Activated CD4-positive, alpha-beta memory T cell treated with anti-CD3 and anti-CD28 coated beads, Interleukin-2, amount 10 ng/mL, durations not matched to agents 7 days and 5 days (primary cell): ENCODE measurements at regions of chr3 and their contacts with region 1.

Region 1: DNA sequence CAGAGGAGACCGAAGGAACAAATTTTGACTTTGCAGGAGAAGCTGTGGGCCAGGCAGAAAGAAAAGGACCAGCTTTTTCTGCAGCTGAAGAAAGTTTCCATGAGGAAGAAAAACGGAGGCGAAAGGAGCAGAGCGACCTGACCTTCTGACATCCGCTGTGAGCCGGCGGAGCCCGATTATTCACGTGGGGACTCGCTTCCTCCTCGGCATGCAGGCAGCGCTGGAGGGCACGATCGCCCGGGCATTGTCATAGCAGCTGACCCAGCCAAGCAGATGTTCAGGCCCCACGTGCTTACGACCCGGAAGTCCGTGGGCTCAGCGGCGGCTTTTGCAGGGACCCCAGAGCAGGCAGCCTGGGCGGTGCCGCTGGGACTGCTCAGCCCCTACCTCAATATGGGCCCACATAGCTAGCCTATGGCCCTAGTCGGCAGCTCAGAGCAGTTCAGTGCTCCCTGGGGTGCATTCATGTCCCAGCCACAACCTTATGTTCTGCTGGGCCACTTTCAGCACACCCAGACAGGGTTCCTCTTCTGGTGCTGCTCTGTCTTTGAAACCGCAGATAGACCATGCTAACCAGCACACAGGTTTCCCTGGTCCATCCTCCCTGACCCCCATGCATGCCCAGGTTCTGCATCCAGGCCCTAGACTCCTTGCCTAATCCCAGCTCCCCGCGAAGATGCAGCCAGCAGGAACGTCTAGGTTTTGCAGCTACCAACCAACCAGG is 10.5 kb upstream of the EIF4A2 start:
- DNase-seq: peak; percentile 74
- H3K4me3 Mint-ChIP-seq: peak overlapping the region; percentile 77
- H3K27ac Mint-ChIP-seq: peak overlapping the region; percentile 77
- H3K4me1 Mint-ChIP-seq: peaks cover 16% of the 10 kb centered on the region
- H3K27me3 Mint-ChIP-seq: no peaks in the 10 kb centered on the region

Region 2: GRCh38 chr3:186442162-186442561 is 330.7 kb before region 1 on chr3:
- CTCF ChIA-PET with region 1: no interaction called
- POLR2A ChIA-PET with region 1: no interaction called
- DNase-seq: no peak
- H3K4me3 Mint-ChIP-seq: no peak overlapping the region
- H3K27ac Mint-ChIP-seq: no peak overlapping the region
- H3K4me1 Mint-ChIP-seq: no peaks in the 10 kb centered on the region
- H3K27me3 Mint-ChIP-seq: peaks cover 11% of the 10 kb centered on the region

Region 3: GRCh38 chr3:186790261-186790981 is 17.6 kb after region 1 on chr3:
- CTCF ChIA-PET with region 1: interaction called, 7 read pairs
- POLR2A ChIA-PET with region 1: interaction called, 240 read pairs
- DNase-seq: no peak
- H3K4me3 Mint-ChIP-seq: no peak overlapping the region
- H3K27ac Mint-ChIP-seq: peak overlapping the region; percentile 22
- H3K4me1 Mint-ChIP-seq: peaks cover 48% of the 10 kb centered on the region
- H3K27me3 Mint-ChIP-seq: no peaks in the 10 kb centered on the region

Region 4: DNA sequence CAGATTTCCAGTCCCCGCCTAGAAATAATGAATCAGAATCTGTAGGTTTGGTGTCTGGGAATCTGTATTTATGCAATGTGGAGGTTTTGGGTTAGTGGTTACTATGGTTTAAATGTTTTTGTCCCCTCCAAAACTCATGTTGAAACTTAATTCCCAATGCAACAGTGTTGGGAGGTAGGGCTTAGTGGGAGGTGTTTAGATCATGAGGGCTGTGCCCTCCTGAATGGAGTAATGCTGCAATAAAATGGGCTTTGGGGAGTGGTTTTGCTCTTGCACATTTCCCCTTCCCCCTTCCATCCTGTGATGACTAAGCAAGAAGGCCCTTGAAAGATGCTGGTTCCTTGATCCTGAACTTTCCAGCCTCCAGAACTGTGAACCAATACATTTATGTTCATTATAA is 42.6 kb after region 1 on chr3:
- CTCF ChIA-PET with region 1: no interaction called
- POLR2A ChIA-PET with region 1: no interaction called
- DNase-seq: peak; percentile 9
- H3K4me3 Mint-ChIP-seq: no peak overlapping the region
- H3K27ac Mint-ChIP-seq: no peak overlapping the region
- H3K4me1 Mint-ChIP-seq: peaks cover 9% of the 10 kb centered on the region
- H3K27me3 Mint-ChIP-seq: no peaks in the 10 kb centered on the region

Region 5: GRCh38 chr3:186826976-186827731 is 54.3 kb after region 1 on chr3:
- CTCF ChIA-PET with region 1: interaction called, 6 read pairs
- POLR2A ChIA-PET with region 1: interaction called, 10 read pairs
- DNase-seq: peak; percentile 89
- H3K4me3 Mint-ChIP-seq: peak overlapping the region; percentile 75
- H3K27ac Mint-ChIP-seq: peak overlapping the region; percentile 57
- H3K4me1 Mint-ChIP-seq: peaks cover 27% of the 10 kb centered on the region
- H3K27me3 Mint-ChIP-seq: peaks cover 39% of the 10 kb centered on the region